Gastrocnemius medialis (tissue), 4 donors: ENCODE measurements at regions of chr9 and their contacts with region 1.

Region 1: GRCh38 chr9:127637322-127637847 is 25.3 kb downstream of the STXBP1 start:
- DNase-seq: no peak
- ATAC-seq: peak; percentile 65 to 73
- H3K4me3 ChIP-seq: peak overlapping the region in 1 of 4 donors; percentile 6
- H3K27ac ChIP-seq: peak overlapping the region in 3 of 4 donors; percentile 7 to 31 (median 9)
- H3K4me1 ChIP-seq: no peaks in the 10 kb centered on the region
- H3K27me3 ChIP-seq: no peaks in the 10 kb centered on the region
- CTCF ChIP-seq: no peak
- POLR2A ChIP-seq: no peak

Region 2: DNA sequence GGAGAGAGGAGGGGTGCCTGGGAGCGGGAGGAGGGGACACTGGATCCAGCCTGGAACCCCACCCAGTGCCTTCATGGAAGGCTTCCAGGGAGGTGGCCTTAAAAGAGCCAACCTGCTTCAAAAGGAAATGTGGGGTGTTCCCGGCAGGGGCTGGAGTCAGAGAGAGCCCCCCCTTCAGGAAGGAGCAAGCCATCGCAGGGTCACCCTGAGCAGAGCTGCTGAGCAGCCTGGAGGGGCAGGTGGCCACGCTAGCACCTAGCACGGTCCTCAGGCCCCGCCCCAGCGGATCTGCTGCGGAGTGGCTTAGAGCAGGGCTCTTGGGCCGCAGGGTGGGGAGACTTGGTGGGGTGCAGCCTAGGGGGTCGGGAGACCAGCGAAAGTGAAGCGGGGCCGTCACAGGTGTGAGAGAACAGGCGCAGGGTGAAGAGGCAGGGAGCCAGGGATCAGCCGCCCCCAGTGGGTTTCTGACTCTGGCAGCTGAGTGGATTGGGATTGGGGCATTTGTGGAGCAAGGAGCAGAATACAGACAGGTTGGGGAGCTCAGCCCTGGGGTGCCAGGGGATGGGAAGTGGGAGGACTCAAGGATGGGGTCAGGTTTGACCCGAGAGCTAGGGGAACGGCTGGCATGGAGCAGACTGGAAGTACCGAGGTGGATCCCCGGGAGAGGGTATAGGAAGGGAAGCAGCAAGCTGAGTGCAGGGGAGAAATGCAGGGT is 513.4 kb after region 1 on chr9:
- in situ Hi-C with region 1: no loop called
- intact Hi-C with region 1: no loop called
- DNase-seq: no peak
- ATAC-seq: no peak
- H3K4me3 ChIP-seq: no peak overlapping the region
- H3K27ac ChIP-seq: no peak overlapping the region
- H3K4me1 ChIP-seq: peaks cover 0 to 8% of the 10 kb centered on the region in 2 donors
- H3K27me3 ChIP-seq: no peaks in the 10 kb centered on the region
- CTCF ChIP-seq: no peak
- POLR2A ChIP-seq: no peak

Region 3: DNA sequence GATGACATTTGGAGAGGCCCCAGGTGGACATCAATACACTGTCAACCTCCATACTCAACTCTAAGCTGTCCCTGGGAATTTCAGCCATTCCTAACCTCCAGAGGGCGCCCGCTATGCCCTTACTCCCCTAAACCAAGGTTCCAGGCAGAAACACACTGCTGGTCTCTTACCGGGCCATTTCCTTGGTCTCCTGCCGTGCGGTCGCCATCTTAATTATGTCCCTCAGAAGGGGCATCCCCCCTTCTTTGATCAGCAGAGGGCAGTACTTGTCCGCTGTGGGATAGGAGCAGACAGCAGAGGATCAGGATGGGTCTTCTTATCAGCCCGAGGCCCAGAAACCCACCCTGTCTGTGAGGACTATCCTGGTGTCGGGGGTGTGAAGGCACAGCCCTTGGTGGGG is 1095.9 kb after region 1 on chr9:
- in situ Hi-C with region 1: no loop called
- intact Hi-C with region 1: loop called (anchors 10 kb)
- DNase-seq: peak in 1 of 2 donors; percentile 53
- ATAC-seq: peak; percentile 76 to 82
- H3K4me3 ChIP-seq: no peak overlapping the region
- H3K27ac ChIP-seq: peak overlapping the region in 1 of 4 donors; percentile 44
- H3K4me1 ChIP-seq: no peaks in the 10 kb centered on the region
- H3K27me3 ChIP-seq: no peaks in the 10 kb centered on the region
- CTCF ChIP-seq: peak in 4 of 5 experiments; percentile 22 to 55 (median 40)
- POLR2A ChIP-seq: no peak